K562 (cell line): ENCODE measurements at regions of chr1 and their contacts with region 1.

Region 1: GRCh38 chr1:157000686-157001085 is 44.9 kb downstream of the ARHGEF11 start:
- DNase-seq: no peak
- ATAC-seq: no peak
- H3K4me3 ChIP-seq: no peak overlapping the region
- H3K27ac ChIP-seq: no peak overlapping the region
- H3K4me1 ChIP-seq: peaks cover 20 to 28% of the 10 kb centered on the region in 2 experiments
- H3K27me3 ChIP-seq: no peaks in the 10 kb centered on the region
- CTCF ChIP-seq: no peak
- EP300 ChIP-seq: no peak
- POLR2A ChIP-seq: no peak
- RAD21 ChIP-seq: no peak

Region 2: GRCh38 chr1:156813750-156814570 is 186.7 kb before region 1 on chr1:
- CTCF ChIA-PET with region 1: no interaction called
- POLR2A ChIA-PET with region 1: no interaction called
- in situ Hi-C with region 1: no loop called
- intact Hi-C with region 1: no loop called
- DNase-seq: peak; percentile 86 to 95 (median 91)
- ATAC-seq: peak; percentile 87
- H3K4me3 ChIP-seq: peak overlapping the region; percentile 50
- H3K27ac ChIP-seq: peak overlapping the region; percentile 86
- H3K4me1 ChIP-seq: peaks cover 55 to 65% of the 10 kb centered on the region in 2 experiments
- H3K27me3 ChIP-seq: no peaks in the 10 kb centered on the region
- CTCF ChIP-seq: peak; percentile 68 to 79 (median 77)
- EP300 ChIP-seq: no peak
- POLR2A ChIP-seq: peak; percentile 79
- RAD21 ChIP-seq: peak; percentile 37 to 44

Region 3: DNA sequence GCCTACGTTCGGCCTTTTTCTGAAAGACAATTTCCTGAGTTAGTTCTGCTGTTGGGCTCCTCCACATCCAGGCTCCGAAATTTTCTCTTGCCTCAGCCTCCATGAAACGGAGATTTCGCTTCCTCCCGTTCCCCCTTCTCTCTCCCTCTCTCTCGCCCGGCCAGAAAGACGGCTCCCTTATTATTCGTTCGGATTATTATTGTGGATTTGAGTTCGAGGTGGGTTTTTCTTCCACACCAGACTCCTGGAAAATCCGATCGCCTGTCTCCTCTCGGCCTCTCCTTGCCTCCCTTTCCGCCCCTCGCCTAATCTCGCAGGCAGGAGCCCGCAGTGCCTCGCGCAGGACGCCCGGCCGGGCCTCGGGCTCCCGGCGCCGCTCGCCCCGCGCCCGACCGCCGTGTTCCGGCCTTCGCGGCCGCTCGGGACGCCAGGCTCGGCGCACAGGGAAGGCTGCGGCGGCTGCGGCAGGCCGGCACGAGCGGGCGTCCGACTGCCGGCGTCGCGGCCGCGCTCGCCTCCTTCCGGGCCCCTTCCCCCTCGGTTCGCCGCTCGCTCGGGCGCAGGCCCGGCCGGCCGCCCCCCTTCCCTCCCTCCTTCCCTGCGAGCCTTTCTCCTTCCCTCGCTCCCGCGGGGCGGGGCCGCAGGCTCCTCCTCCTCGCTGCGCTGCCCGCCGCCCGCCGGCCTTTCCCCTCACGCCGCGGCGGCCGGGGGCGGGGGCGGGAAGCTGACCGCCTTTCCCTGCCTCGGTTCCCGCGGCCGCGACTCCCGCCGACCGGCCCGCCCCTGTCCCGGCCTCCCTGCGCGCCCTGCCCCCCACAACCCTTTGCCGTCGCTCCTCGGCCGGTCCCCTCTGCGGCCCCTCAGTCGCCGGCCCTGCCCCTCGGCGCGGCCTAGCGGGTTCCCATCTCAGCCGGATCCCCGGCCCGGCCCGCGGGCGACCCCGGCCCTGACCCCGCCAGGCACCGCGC is 44.8 kb after region 1 on chr1 and contains the start of gene ARHGEF11:
- CTCF ChIA-PET with region 1: no interaction called
- POLR2A ChIA-PET with region 1: no interaction called
- in situ Hi-C with region 1: no loop called
- intact Hi-C with region 1: loop called (anchors 1 kb)
- DNase-seq: peak; percentile 91 to 95 (median 93)
- ATAC-seq: peak; percentile 96
- H3K4me3 ChIP-seq: peak within 1 kb of the TSS; percentile 49
- H3K27ac ChIP-seq: peak within 1 kb of the TSS; percentile 61
- H3K4me1 ChIP-seq: peaks cover 24 to 36% of the 10 kb centered on the region in 2 experiments
- H3K27me3 ChIP-seq: no peaks in the 10 kb centered on the region
- CTCF ChIP-seq: no peak
- EP300 ChIP-seq: 0 out of 2 replicates have a peak, but pooled peaks have one; percentile 8
- POLR2A ChIP-seq: no peak; the same call in 1 of the 2 replicates
- RAD21 ChIP-seq: no peak
- polyA plus RNA-seq, gene ARHGEF11: 0.14 to 0.48 TPM